ENCODE measurements at regions of chr1 and their contacts with region 1.

Region 1: DNA sequence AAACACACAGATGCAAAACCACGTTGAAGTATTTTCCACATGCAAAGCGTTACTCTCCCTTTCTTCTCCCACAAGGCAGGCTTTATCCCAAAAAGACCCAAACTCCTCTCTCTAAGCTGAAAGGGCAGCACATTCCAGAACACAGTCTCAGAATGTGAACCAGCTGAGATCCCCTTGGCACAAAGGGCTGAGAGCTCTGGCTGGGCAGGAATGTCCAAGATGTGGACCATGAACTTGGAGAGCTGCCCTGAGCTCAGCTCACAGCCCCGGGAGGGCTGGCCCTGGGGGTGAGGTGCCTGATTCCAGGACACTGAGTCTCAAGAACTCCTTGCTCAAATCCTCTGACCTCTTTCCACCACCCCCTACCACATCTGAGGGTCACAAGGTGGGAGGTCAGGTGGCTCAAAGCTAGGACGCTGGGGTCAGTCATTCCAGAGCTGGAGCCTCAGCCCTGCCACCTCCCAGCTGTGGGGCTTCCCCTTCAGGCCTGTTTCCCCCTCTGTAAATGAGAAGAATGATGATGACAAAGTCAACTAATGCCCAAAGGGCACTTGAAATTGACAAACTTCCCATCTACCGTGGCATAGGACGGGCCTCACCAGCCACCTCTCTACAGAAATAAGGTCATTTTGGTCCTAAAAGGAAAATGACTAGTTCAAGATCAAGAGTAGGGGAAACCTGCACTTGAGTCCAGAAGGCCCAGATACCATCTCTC is 11.5 kb downstream of the ALDH4A1 start:
- DNase-seq: no peak
- ATAC-seq: no peak
- H3K4me3 ChIP-seq: no peak overlapping the region
- H3K4me3 Mint-ChIP-seq: no peak overlapping the region
- H3K27ac ChIP-seq: no peak overlapping the region
- H3K27ac Mint-ChIP-seq: no peak overlapping the region
- H3K4me1 ChIP-seq: no peaks in the 10 kb centered on the region
- H3K4me1 Mint-ChIP-seq: no peaks in the 10 kb centered on the region
- H3K27me3 ChIP-seq: no peaks in the 10 kb centered on the region
- H3K27me3 Mint-ChIP-seq: no peaks in the 10 kb centered on the region
- CTCF ChIP-seq: no peak

Region 2: GRCh38 chr1:18144916-18145647 is 745.8 kb before region 1 on chr1:
- CTCF ChIA-PET with region 1: no interaction called
- POLR2A ChIA-PET with region 1: no interaction called
- intact Hi-C with region 1: no loop called
- DNase-seq: no peak
- ATAC-seq: no peak
- H3K4me3 ChIP-seq: no peak overlapping the region
- H3K4me3 Mint-ChIP-seq: no peak overlapping the region
- H3K27ac ChIP-seq: no peak overlapping the region
- H3K27ac Mint-ChIP-seq: no peak overlapping the region
- H3K4me1 ChIP-seq: no peaks in the 10 kb centered on the region
- H3K4me1 Mint-ChIP-seq: no peaks in the 10 kb centered on the region
- H3K27me3 ChIP-seq: peaks cover 0 to 2% of the 10 kb centered on the region in 2 experiments
- H3K27me3 Mint-ChIP-seq: no peaks in the 10 kb centered on the region
- CTCF ChIP-seq: no peak

Region 3: GRCh38 chr1:19882111-19883071 is 991.5 kb after region 1 on chr1 and contains the start of gene OTUD3:
- CTCF ChIA-PET with region 1: no interaction called
- POLR2A ChIA-PET with region 1: no interaction called
- intact Hi-C with region 1: loop called in 1 of 2 experiments (anchors 5 kb)
- DNase-seq: peak; percentile 89 to 99 (median 95)
- ATAC-seq: peak; percentile 97
- H3K4me3 ChIP-seq: peak within 1 kb of the TSS; percentile 71 to 88
- H3K4me3 Mint-ChIP-seq: peak within 1 kb of the TSS; percentile 90
- H3K27ac ChIP-seq: peak within 1 kb of the TSS; percentile 67 to 77
- H3K27ac Mint-ChIP-seq: peak within 1 kb of the TSS; percentile 61
- H3K4me1 ChIP-seq: peaks cover 18% of the 10 kb centered on the region
- H3K4me1 Mint-ChIP-seq: peaks cover 43% of the 10 kb centered on the region
- H3K27me3 ChIP-seq: no peaks in the 10 kb centered on the region
- H3K27me3 Mint-ChIP-seq: no peaks in the 10 kb centered on the region
- CTCF ChIP-seq: peak; percentile 90
- total RNA-seq, gene OTUD3: 16.5 to 17.3 TPM

Measured in CD8-positive, alpha-beta T cell (primary cell).